H1 (cell line): ENCODE measurements at regions of chr3 and their contacts with region 1.

Region 1: GRCh38 chr3:52444860-52445793 is at the start of gene SEMA3G:
- DNase-seq: peak; percentile 56 to 87
- H3K4me3 ChIP-seq: peak within 1 kb of the TSS in 1 of 4 experiments; percentile 38; a peak in 2 of 8 replicates
- H3K27ac ChIP-seq: no peak within 1 kb of the TSS
- H3K4me1 ChIP-seq: peaks cover 0 to 14% (median 7%) of the 10 kb centered on the region in 4 experiments; a peak in 5 of 7 replicates
- H3K27me3 ChIP-seq: 0 out of 7 replicates have a peak, but pooled peaks cover 0 to 2% (median 0%) of the 10 kb centered on the region in 4 experiments
- CTCF ChIP-seq: peak in 2 of 3 experiments; percentile 73; a peak in 3 of 4 replicates
- EP300 ChIP-seq: no peak
- POLR2A ChIP-seq: peak in 1 of 2 experiments; percentile 71; a peak in 2 of 3 replicates
- RAD21 ChIP-seq: peak in 1 of 2 experiments; percentile 33; a peak in 2 of 4 replicates
- total RNA-seq, gene SEMA3G: 1.5 TPM in 2 replicates

Region 2: GRCh38 chr3:52346623-52347530 is 98.2 kb before region 1 on chr3:
- CTCF ChIA-PET with region 1: interaction called, 18 read pairs
- POLR2A ChIA-PET with region 1: no interaction called
- DNase-seq: no peak
- H3K4me3 ChIP-seq: no peak overlapping the region
- H3K27ac ChIP-seq: no peak overlapping the region
- H3K4me1 ChIP-seq: no peaks in the 10 kb centered on the region
- H3K27me3 ChIP-seq: no peaks in the 10 kb centered on the region; a peak in 1 of 7 replicates
- CTCF ChIP-seq: no peak
- EP300 ChIP-seq: no peak
- POLR2A ChIP-seq: no peak
- RAD21 ChIP-seq: no peak

Region 3: GRCh38 chr3:52400275-52400793 is 44.8 kb before region 1 on chr3:
- CTCF ChIA-PET with region 1: interaction called, 14 read pairs
- POLR2A ChIA-PET with region 1: interaction called, 4 read pairs
- DNase-seq: no peak
- H3K4me3 ChIP-seq: no peak overlapping the region
- H3K27ac ChIP-seq: no peak overlapping the region
- H3K4me1 ChIP-seq: no peaks in the 10 kb centered on the region
- H3K27me3 ChIP-seq: no peaks in the 10 kb centered on the region
- CTCF ChIP-seq: no peak
- EP300 ChIP-seq: no peak
- POLR2A ChIP-seq: no peak
- RAD21 ChIP-seq: no peak

Region 4: GRCh38 chr3:52428151-52429005 is 16.7 kb before region 1 on chr3:
- CTCF ChIA-PET with region 1: interaction called, 20 read pairs
- POLR2A ChIA-PET with region 1: interaction called, 112 read pairs
- DNase-seq: no peak
- H3K4me3 ChIP-seq: no peak overlapping the region
- H3K27ac ChIP-seq: no peak overlapping the region
- H3K4me1 ChIP-seq: peaks cover 0 to under 1% (median 0%) of the 10 kb centered on the region in 4 experiments; a peak in 1 of 7 replicates
- H3K27me3 ChIP-seq: no peaks in the 10 kb centered on the region
- CTCF ChIP-seq: peak in 2 of 3 experiments; percentile 79 to 81; a peak in 3 of 4 replicates
- EP300 ChIP-seq: no peak
- POLR2A ChIP-seq: no peak
- RAD21 ChIP-seq: peak; percentile 80 to 86

Region 5: DNA sequence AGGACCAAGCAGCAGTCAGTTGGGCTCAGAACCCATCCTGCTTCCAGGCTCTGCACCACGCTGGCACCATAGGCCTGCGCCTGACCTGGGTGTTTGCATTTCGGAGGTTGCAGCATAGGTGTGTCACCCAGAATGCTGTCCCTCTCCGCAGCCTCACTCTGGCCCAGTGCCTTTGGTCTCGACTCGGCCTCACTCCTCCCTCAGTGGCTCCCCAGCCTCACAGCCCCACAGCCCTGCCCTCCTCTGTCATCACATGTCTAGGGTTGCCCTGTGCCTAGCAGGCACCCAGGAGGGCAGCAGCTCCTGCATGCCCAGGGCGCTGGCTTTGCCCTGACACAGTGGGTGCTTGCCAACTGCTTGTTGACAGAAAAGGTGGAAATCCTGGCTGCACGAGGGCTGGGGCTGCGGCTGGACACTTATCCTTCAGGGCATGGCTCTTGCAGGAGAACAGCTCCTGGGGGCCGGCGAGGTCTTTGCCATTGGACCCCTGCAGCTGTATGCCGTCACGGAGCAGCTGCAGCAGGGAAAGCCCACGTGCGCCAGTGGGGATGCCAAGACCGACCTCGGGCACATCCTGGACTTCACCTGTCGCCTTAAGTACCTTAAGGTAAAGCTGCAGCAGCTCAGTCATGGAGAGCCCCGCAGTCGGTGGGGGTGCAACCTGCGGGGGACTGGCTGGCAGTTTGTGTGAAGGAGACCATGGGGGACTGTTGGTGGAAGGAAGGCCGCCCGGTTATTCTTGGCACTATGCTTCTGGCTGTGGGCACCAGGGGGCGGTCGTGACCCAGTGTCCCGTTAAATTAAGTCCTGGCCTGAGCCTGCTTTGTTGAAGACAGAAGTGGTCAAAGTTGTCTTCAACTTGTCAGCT is 26.5 kb after region 1 on chr3:
- CTCF ChIA-PET with region 1: interaction called, 79 read pairs
- POLR2A ChIA-PET with region 1: no interaction called
- DNase-seq: peak in 1 of 2 experiments; percentile 85
- H3K4me3 ChIP-seq: no peak overlapping the region
- H3K27ac ChIP-seq: no peak overlapping the region
- H3K4me1 ChIP-seq: no peaks in the 10 kb centered on the region; a peak in 3 of 7 replicates
- H3K27me3 ChIP-seq: no peaks in the 10 kb centered on the region; a peak in 1 of 7 replicates
- CTCF ChIP-seq: peak; percentile 59 to 87 (median 76)
- EP300 ChIP-seq: no peak
- POLR2A ChIP-seq: no peak
- RAD21 ChIP-seq: peak; percentile 63 to 72

Region 6: GRCh38 chr3:52509753-52510328 is 64.7 kb after region 1 on chr3:
- CTCF ChIA-PET with region 1: interaction called, 13 read pairs
- POLR2A ChIA-PET with region 1: no interaction called
- DNase-seq: no peak
- H3K4me3 ChIP-seq: no peak overlapping the region
- H3K27ac ChIP-seq: no peak overlapping the region
- H3K4me1 ChIP-seq: peaks cover 0 to 4% (median 0%) of the 10 kb centered on the region in 4 experiments; a peak in 1 of 7 replicates
- H3K27me3 ChIP-seq: no peaks in the 10 kb centered on the region
- CTCF ChIP-seq: peak in 1 of 3 experiments; percentile 12; a peak in 1 of 4 replicates
- EP300 ChIP-seq: no peak
- POLR2A ChIP-seq: no peak
- RAD21 ChIP-seq: 0 out of 4 replicates have a peak, but pooled peaks of 1 of the 2 experiments have one; percentile 22

Region 7: DNA sequence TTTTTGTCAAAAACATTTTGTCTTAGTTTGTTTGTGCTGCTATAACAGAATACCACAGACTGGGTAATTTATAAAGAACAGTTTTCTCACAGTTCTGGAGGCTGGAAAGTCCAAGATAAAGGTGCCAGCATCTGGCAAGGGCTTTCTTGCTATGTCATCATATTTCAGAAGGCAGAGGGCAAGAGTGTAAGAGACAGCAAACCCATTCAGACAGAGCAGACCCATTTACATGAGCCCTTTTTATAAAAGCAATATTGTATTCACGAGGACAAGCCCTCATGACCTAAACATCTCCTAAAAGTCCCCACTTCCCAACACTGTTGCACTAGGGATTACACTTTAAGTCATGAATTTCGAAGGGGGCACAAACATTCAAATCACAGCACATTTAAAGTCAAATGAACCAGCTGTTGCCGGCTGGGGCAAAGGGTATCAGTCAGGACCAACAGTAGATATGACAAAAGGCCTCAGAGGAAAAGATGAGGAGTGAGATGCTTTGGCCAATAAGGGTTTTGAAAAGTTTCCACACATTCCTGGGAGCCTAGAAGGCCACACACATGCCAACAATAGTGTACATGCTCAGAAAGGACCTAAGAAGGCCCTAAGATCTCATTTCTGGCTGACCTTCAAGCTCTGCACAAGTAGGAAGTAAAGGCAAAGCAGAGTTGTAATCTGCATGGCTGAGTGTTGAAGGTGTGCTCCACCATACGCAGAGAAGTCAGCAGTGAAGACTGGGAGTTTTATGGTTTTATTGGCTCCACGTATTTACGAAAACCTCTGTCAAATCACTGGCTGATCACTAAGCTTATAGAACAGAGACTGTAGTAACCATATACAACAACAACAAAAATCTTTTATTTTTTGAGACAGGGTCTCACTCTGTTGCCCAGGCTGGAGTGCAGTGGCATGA is 129.2 kb after region 1 on chr3:
- CTCF ChIA-PET with region 1: no interaction called
- POLR2A ChIA-PET with region 1: no interaction called
- DNase-seq: no peak
- H3K4me3 ChIP-seq: no peak overlapping the region
- H3K27ac ChIP-seq: no peak overlapping the region
- H3K4me1 ChIP-seq: no peaks in the 10 kb centered on the region
- H3K27me3 ChIP-seq: no peaks in the 10 kb centered on the region
- CTCF ChIP-seq: no peak
- EP300 ChIP-seq: no peak
- POLR2A ChIP-seq: no peak
- RAD21 ChIP-seq: no peak

Region 8: GRCh38 chr3:52606373-52607085 is 161.4 kb after region 1 on chr3:
- CTCF ChIA-PET with region 1: no interaction called
- POLR2A ChIA-PET with region 1: no interaction called
- DNase-seq: no peak
- H3K4me3 ChIP-seq: no peak overlapping the region
- H3K27ac ChIP-seq: no peak overlapping the region
- H3K4me1 ChIP-seq: no peaks in the 10 kb centered on the region
- H3K27me3 ChIP-seq: no peaks in the 10 kb centered on the region
- CTCF ChIP-seq: no peak
- EP300 ChIP-seq: no peak
- POLR2A ChIP-seq: no peak
- RAD21 ChIP-seq: no peak